ENCODE measurements at regions of chr11 and their contacts with region 1.

Region 1: DNA sequence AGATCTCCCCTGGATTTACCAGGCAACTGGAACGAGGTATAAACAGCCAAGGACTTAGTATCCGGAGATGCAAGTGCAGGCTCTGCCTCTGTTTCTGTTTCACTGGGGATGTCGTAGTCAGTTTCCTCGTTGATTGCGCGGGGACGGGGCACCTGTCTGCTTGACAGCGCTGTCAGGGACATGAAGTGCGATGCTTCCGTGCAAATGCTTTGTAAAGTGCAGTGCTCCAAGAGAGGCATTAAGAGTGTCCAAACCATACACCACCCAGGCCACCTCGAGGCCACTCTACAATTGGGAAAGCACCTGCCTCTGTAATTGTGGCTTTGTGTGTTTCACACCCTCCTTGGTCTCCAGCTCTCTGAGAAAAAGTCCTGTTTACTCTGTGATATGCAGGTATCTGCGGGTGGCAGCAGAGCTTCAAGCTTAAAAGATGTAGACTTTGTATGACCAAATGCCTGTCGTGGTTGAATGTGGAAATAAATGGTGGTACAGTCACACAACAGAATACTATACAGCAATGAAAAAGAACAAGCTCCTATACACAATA is 18.6 kb upstream of the CD5 start:
- DNase-seq: peak; percentile 45 to 85 (median 77)
- ATAC-seq: peak; percentile 79
- H3K4me3 ChIP-seq: peak overlapping the region; percentile 40
- H3K4me3 Mint-ChIP-seq: peak overlapping the region; percentile 74 to 90 (median 85)
- H3K27ac ChIP-seq: peak overlapping the region; percentile 80
- H3K27ac Mint-ChIP-seq: peak overlapping the region; percentile 97 to 100 (median 99)
- H3K4me1 ChIP-seq: peaks cover 28 to 51% of the 10 kb centered on the region in 2 donors
- H3K4me1 Mint-ChIP-seq: peaks cover 39 to 64% (median 54%) of the 10 kb centered on the region in 7 donors
- H3K27me3 ChIP-seq: no peaks in the 10 kb centered on the region
- H3K27me3 Mint-ChIP-seq: no peaks in the 10 kb centered on the region

Region 2: GRCh38 chr11:60887556-60887955 is 196.1 kb before region 1 on chr11:
- CTCF ChIA-PET with region 1: no interaction called
- POLR2A ChIA-PET with region 1: no interaction called
- intact Hi-C with region 1: no loop called
- DNase-seq: peak in 2 of 9 donors; percentile 14 to 24
- ATAC-seq: peak; percentile 87
- H3K4me3 ChIP-seq: no peak overlapping the region
- H3K4me3 Mint-ChIP-seq: no peak overlapping the region
- H3K27ac ChIP-seq: no peak overlapping the region
- H3K27ac Mint-ChIP-seq: no peak overlapping the region
- H3K4me1 ChIP-seq: no peaks in the 10 kb centered on the region
- H3K4me1 Mint-ChIP-seq: peaks cover 0 to 9% (median 7%) of the 10 kb centered on the region in 7 donors
- H3K27me3 ChIP-seq: no peaks in the 10 kb centered on the region
- H3K27me3 Mint-ChIP-seq: no peaks in the 10 kb centered on the region

Region 3: DNA sequence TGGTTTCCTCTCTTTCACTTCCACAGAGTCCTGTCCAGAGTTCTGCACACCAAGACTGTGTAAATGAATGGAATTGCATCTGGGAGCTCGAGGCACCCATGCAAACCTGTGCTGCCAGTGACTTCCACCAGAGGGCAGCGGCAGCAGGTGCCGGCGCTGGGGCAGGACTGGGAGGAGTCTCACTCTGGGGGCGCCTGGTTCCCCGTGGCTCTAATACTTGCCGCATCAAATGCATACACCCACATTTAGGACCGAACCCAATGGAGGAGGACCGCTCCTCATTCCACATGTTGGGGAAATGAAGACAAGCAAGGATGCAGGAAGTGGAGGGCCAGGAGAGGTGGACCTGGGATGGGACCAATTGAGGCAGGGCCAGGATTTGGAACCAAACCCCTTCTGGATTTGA is 113.3 kb before region 1 on chr11:
- CTCF ChIA-PET with region 1: interaction called, 4 read pairs
- POLR2A ChIA-PET with region 1: interaction called, 5 read pairs
- intact Hi-C with region 1: loop called in 1 of 2 experiments (anchors 2 kb)
- DNase-seq: peak; percentile 66 to 85 (median 80)
- ATAC-seq: peak; percentile 83
- H3K4me3 ChIP-seq: peak overlapping the region; percentile 83
- H3K4me3 Mint-ChIP-seq: peak overlapping the region; percentile 92 to 98 (median 96)
- H3K27ac ChIP-seq: peak overlapping the region; percentile 96
- H3K27ac Mint-ChIP-seq: peak overlapping the region; percentile 39 to 99 (median 95)
- H3K4me1 ChIP-seq: peaks cover 13 to 17% of the 10 kb centered on the region in 2 donors
- H3K4me1 Mint-ChIP-seq: peaks cover 14 to 29% (median 20%) of the 10 kb centered on the region in 7 donors
- H3K27me3 ChIP-seq: no peaks in the 10 kb centered on the region
- H3K27me3 Mint-ChIP-seq: peaks cover 0 to 11% (median 0%) of the 10 kb centered on the region in 5 donors

Region 4: GRCh38 chr11:61021661-61022212 is 61.9 kb before region 1 on chr11:
- CTCF ChIA-PET with region 1: interaction called, 10 read pairs
- POLR2A ChIA-PET with region 1: interaction called, 63 read pairs
- intact Hi-C with region 1: loop called in 1 of 2 experiments (anchors 2 kb)
- DNase-seq: peak; percentile 72 to 98 (median 96)
- ATAC-seq: peak; percentile 91
- H3K4me3 ChIP-seq: peak overlapping the region; percentile 53
- H3K4me3 Mint-ChIP-seq: peak overlapping the region; percentile 68 to 90 (median 81)
- H3K27ac ChIP-seq: peak overlapping the region; percentile 82
- H3K27ac Mint-ChIP-seq: peak overlapping the region; percentile 88 to 100 (median 98)
- H3K4me1 ChIP-seq: peaks cover 49 to 56% of the 10 kb centered on the region in 2 donors
- H3K4me1 Mint-ChIP-seq: peaks cover 40 to 79% (median 76%) of the 10 kb centered on the region in 7 donors
- H3K27me3 ChIP-seq: no peaks in the 10 kb centered on the region
- H3K27me3 Mint-ChIP-seq: no peaks in the 10 kb centered on the region

Region 5: DNA sequence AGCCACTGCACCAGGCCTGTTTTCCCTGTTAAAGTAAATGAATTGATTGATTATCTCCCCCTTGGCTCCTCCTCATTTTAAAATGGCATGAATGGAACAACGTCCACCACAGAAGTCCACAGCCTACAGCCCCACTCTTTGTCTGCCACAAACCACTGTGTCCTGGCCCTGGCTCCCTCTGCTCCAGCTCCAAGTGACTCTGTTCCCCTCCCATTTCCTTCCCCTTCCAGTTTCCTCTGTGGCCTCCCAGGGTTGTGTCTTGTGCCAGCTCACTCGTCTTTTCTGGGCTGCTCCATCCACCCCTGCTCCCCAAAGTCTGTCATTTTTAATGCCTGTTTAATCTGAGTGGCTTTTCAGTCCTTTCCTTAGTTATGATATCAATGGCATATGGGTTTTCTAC is 33.8 kb before region 1 on chr11:
- CTCF ChIA-PET with region 1: interaction called, 6 read pairs
- POLR2A ChIA-PET with region 1: interaction called, 222 read pairs
- intact Hi-C with region 1: no loop called
- DNase-seq: no peak
- ATAC-seq: no peak
- H3K4me3 ChIP-seq: no peak overlapping the region
- H3K4me3 Mint-ChIP-seq: peak overlapping the region in 4 of 10 donors; percentile 18 to 51 (median 34)
- H3K27ac ChIP-seq: no peak overlapping the region
- H3K27ac Mint-ChIP-seq: peak overlapping the region in 8 of 9 donors; percentile 10 to 90 (median 76)
- H3K4me1 ChIP-seq: peaks cover 0 to 37% of the 10 kb centered on the region in 2 donors
- H3K4me1 Mint-ChIP-seq: peaks cover 28 to 75% (median 69%) of the 10 kb centered on the region in 7 donors
- H3K27me3 ChIP-seq: no peaks in the 10 kb centered on the region
- H3K27me3 Mint-ChIP-seq: no peaks in the 10 kb centered on the region

Region 6: GRCh38 chr11:61071208-61071681 is 12.4 kb before region 1 on chr11:
- CTCF ChIA-PET with region 1: interaction called, 30 read pairs
- POLR2A ChIA-PET with region 1: interaction called, 233 read pairs
- intact Hi-C with region 1: no loop called
- DNase-seq: peak in 8 of 9 donors; percentile 56 to 78 (median 71)
- ATAC-seq: peak; percentile 96
- H3K4me3 ChIP-seq: peak overlapping the region; percentile 21
- H3K4me3 Mint-ChIP-seq: peak overlapping the region; percentile 65 to 87 (median 76)
- H3K27ac ChIP-seq: peak overlapping the region; percentile 76
- H3K27ac Mint-ChIP-seq: peak overlapping the region; percentile 92 to 97 (median 97)
- H3K4me1 ChIP-seq: peaks cover 41 to 81% of the 10 kb centered on the region in 2 donors
- H3K4me1 Mint-ChIP-seq: peaks cover 69 to 99% (median 91%) of the 10 kb centered on the region in 7 donors
- H3K27me3 ChIP-seq: no peaks in the 10 kb centered on the region
- H3K27me3 Mint-ChIP-seq: peaks cover 0 to 4% (median 0%) of the 10 kb centered on the region in 5 donors

Region 7: DNA sequence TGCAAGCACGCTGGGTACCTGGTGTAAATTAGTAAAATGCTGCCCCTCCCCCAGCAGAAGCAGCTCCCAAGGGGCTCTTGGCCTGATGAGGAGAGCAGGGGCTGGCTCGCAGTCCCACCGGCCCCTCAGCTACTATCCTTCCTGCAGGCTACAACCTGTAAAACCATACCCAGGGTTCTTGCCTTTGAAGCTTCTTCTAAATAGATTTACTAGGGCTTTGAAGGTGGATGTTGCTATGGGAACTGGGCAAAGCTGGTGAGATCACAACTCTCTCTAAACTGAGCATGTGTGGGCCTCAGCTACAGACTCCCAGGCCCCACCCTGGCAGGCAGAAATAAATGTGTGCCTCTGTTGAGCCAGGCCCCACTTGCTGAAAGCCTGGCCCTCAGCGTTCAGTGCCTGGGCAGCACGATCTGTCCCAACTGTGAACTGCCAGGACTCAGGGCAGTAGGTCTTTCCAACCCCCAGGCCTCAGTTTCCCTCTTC is 37.1 kb after region 1 on chr11:
- CTCF ChIA-PET with region 1: interaction called, 5 read pairs
- POLR2A ChIA-PET with region 1: interaction called, 113 read pairs
- intact Hi-C with region 1: loop called in 1 of 2 experiments (anchors 2 kb)
- DNase-seq: peak in 7 of 9 donors; percentile 81 to 92 (median 88)
- ATAC-seq: peak; percentile 93
- H3K4me3 ChIP-seq: peak overlapping the region; percentile 21
- H3K4me3 Mint-ChIP-seq: peak overlapping the region in 9 of 10 donors; percentile 73 to 85 (median 82)
- H3K27ac ChIP-seq: peak overlapping the region; percentile 79
- H3K27ac Mint-ChIP-seq: peak overlapping the region; percentile 77 to 100 (median 99)
- H3K4me1 ChIP-seq: peaks cover 15 to 45% of the 10 kb centered on the region in 2 donors
- H3K4me1 Mint-ChIP-seq: peaks cover 40 to 77% (median 64%) of the 10 kb centered on the region in 7 donors
- H3K27me3 ChIP-seq: no peaks in the 10 kb centered on the region
- H3K27me3 Mint-ChIP-seq: no peaks in the 10 kb centered on the region

Region 8: GRCh38 chr11:61153593-61154095 is 70.0 kb after region 1 on chr11:
- CTCF ChIA-PET with region 1: no interaction called
- POLR2A ChIA-PET with region 1: no interaction called
- intact Hi-C with region 1: no loop called
- DNase-seq: no peak
- ATAC-seq: no peak
- H3K4me3 ChIP-seq: no peak overlapping the region
- H3K4me3 Mint-ChIP-seq: no peak overlapping the region
- H3K27ac ChIP-seq: no peak overlapping the region
- H3K27ac Mint-ChIP-seq: no peak overlapping the region
- H3K4me1 ChIP-seq: no peaks in the 10 kb centered on the region
- H3K4me1 Mint-ChIP-seq: peaks cover 14 to 45% (median 26%) of the 10 kb centered on the region in 7 donors
- H3K27me3 ChIP-seq: no peaks in the 10 kb centered on the region
- H3K27me3 Mint-ChIP-seq: no peaks in the 10 kb centered on the region

Region 9: DNA sequence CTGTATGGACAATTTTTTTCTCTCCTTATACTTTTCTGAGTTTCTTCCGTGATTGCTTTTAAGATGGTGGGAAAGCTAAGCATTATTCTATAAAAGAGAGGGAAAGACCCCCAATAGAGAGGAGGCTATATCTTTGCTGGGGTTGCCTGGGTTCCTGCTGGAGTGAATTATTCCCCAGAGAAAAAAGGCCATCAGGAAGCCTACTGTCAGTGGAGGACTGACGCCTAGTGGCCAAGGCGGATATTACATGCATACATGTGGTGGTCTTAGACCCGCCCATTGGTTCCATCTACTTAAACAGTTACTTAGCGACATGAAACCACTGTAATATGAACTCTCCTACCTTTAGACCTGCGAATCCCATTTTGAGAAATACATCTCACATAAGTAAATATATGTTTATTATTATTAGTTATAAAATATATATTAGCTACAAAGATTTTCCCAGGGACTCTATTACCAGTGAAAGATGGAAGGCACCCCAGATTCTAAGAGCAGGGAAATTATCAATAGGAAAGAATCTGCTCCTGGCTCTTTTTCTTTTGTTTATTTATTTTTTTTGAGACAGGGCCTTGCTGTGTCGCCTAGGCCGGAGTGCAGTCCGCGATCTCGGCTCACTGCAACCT is 103.9 kb after region 1 on chr11:
- CTCF ChIA-PET with region 1: interaction called, 3 read pairs
- POLR2A ChIA-PET with region 1: no interaction called
- intact Hi-C with region 1: loop called in 1 of 2 experiments (anchors 2 kb)
- DNase-seq: peak; percentile 48 to 76 (median 72)
- ATAC-seq: peak; percentile 96
- H3K4me3 ChIP-seq: no peak overlapping the region
- H3K4me3 Mint-ChIP-seq: no peak overlapping the region
- H3K27ac ChIP-seq: no peak overlapping the region
- H3K27ac Mint-ChIP-seq: peak overlapping the region in 1 of 9 donors; percentile 25
- H3K4me1 ChIP-seq: no peaks in the 10 kb centered on the region
- H3K4me1 Mint-ChIP-seq: peaks cover 0 to 5% (median 0%) of the 10 kb centered on the region in 7 donors
- H3K27me3 ChIP-seq: no peaks in the 10 kb centered on the region
- H3K27me3 Mint-ChIP-seq: peaks cover 0 to 13% (median 4%) of the 10 kb centered on the region in 5 donors